ENCODE measurements at regions of chr4 and their contacts with region 1.

Region 1: GRCh38 chr4:103099691-103100392 is at the start of gene BDH2:
- DNase-seq: peak; percentile 49
- ATAC-seq: peak; percentile 97
- H3K4me3 Mint-ChIP-seq: peak within 1 kb of the TSS; percentile 90
- H3K27ac Mint-ChIP-seq: peak within 1 kb of the TSS; percentile 90
- H3K4me1 Mint-ChIP-seq: peaks cover 23% of the 10 kb centered on the region
- H3K27me3 Mint-ChIP-seq: no peaks in the 10 kb centered on the region
- CTCF ChIP-seq: peak; percentile 77
- total RNA-seq, gene BDH2: 17.0 to 19.4 TPM

Region 2: DNA sequence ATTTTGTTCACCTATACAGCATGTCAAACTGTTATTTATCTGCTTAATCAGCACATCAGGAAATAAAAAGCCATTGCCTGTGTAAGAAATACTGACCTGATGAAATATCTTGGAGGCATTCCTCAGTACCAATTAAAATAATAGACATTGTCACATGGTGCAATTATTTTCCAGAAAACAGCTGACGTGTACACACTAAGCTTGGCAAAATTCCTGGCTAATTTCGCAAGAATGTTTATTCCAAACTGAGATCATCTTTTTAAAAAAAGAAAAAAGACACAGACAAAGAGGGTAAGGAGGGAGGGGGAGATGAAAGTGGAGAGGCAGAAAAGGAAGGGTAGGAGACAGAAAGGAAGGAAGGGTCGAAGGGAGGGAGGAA is 660.6 kb before region 1 on chr4:
- CTCF ChIA-PET with region 1: interaction called, 3 read pairs
- POLR2A ChIA-PET with region 1: no interaction called
- intact Hi-C with region 1: loop called (anchors 10 kb)
- DNase-seq: no peak
- ATAC-seq: no peak
- H3K4me3 Mint-ChIP-seq: no peak overlapping the region
- H3K27ac Mint-ChIP-seq: no peak overlapping the region
- H3K4me1 Mint-ChIP-seq: no peaks in the 10 kb centered on the region
- H3K27me3 Mint-ChIP-seq: no peaks in the 10 kb centered on the region
- CTCF ChIP-seq: no peak

Region 3: DNA sequence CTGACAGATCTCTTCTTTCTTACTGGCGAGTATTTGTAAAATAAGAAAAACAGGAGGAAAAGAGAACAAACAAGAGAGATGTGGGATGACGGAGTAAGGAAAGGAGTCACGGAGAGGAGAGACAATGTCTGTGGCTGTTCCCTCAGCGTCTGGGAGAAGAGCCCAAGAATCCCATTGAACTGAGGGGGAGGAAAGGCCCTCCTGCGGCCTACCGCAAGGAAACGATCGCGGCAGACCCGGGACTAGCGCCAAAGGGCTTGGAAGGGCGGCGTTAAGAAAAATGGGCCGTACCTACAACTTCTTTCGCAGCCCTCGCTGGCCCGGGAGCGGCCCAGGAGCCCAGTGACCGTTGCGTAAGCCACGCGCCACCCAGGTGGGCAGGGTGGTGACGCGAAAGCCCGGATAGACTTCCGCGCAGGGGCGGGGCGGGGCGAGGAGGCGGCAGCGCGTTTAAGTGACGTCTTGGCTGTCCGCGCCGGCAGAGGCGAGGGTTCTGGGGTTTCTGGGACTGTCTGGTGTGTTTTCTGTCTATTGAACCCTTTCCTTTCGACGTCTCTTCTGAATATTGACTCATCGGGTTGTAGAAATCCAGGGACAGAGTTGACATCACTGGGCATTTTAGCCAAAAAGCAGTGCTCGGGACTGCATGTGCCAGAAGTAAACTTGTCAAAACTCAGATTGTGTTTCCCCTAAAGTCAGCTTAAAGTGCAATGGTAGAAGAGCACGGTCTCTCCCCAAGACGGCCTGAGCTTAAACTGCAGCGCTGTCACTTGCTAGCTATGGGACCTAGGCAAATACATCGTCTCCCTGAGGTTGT is 80.3 kb before region 1 on chr4 and contains the start of gene SLC9B1:
- CTCF ChIA-PET with region 1: interaction called, 12 read pairs
- POLR2A ChIA-PET with region 1: interaction called, 3 read pairs
- intact Hi-C with region 1: no loop called
- DNase-seq: peak; percentile 96
- ATAC-seq: peak; percentile 99
- H3K4me3 Mint-ChIP-seq: peak within 1 kb of the TSS; percentile 87
- H3K27ac Mint-ChIP-seq: peak within 1 kb of the TSS; percentile 99
- H3K4me1 Mint-ChIP-seq: peaks cover 15% of the 10 kb centered on the region
- H3K27me3 Mint-ChIP-seq: no peaks in the 10 kb centered on the region
- CTCF ChIP-seq: no peak
- total RNA-seq, gene SLC9B1: 1.9 to 2.4 TPM

Region 4: DNA sequence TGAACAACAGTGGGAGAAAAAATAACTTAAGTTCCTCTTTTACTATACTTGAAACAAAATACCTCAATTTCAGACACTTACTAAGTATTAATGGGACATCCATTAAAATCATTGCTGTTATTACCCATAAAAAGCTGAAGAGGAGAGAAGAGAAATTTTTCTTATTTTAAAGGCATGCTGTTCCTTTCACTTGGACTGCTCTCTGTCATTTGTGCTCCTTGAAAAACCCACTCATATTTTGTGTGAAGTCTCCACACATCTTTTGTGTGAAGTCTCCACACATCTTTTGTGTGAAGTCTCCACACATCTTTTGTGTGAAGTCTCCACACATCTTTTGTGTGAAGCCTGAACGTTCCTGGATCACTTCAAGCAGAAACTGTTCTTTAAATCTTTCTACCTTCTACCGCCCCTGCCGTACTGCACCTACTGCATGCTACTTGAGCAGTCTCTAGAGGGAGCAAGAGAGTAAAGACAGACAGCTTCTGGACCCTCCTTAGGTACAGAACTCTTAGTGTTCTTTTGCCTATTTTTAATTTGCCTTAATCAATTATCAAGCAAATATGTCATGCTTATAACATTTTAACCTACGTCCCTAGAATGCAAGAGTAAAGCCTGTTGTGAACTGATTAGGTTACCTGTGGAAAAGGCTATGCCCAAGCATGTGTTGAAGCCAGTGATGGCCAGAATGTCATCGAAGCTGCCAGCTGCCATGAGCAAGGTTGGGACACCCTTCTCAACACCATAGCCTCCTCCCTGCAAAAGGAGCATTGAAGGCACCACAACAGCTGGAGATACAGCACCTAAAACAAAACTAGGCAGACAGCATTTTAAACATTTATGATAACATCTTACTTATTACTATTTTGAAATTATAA is 53.2 kb before region 1 on chr4:
- CTCF ChIA-PET with region 1: interaction called, 13 read pairs
- POLR2A ChIA-PET with region 1: no interaction called
- intact Hi-C with region 1: no loop called
- DNase-seq: peak; percentile 37
- ATAC-seq: peak; percentile 95
- H3K4me3 Mint-ChIP-seq: no peak overlapping the region
- H3K27ac Mint-ChIP-seq: no peak overlapping the region
- H3K4me1 Mint-ChIP-seq: peaks cover 10% of the 10 kb centered on the region
- H3K27me3 Mint-ChIP-seq: no peaks in the 10 kb centered on the region
- CTCF ChIP-seq: peak; percentile 75

Region 5: DNA sequence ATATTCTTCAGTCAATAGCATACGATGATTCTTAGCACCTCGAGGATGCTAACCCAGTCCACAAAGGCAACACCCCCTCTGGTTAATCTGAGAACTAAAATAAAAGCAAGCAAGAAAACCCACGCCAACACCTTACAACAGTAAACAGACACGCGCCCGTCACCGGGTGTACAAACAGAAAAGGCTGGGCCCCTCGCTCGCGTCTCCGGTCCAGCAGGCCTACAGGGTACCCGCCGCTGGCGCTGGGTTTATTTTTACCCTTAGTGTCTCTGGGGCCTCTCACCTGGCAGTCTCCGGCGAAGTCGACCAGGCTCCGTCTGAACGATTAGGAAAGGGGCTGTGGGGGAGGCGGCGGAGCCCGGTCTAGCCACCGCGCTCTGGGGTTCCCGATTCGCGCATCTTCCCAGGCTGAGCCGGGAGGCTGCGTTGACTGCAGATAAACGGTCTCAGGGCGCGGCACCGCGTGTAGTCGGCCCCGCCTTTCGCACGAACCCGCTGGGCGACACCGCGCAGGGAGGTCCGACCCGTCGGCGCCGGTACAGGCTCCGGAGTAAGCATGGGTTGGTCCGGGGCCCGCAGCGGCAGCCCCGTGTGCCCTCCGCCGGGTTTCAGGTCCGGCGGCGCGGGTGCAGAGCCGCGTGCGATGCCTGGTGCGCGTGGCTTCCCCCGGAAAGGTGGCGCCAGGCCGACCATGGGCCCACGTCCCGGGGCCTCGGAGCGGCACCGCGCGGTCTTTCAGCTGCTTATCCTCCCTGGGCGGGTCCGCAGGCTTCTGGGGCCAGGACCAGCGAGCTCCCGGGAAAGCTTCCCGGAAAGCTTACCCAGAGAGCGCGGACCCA is 23.7 kb before region 1 on chr4:
- CTCF ChIA-PET with region 1: interaction called, 71 read pairs
- POLR2A ChIA-PET with region 1: interaction called, 6 read pairs
- intact Hi-C with region 1: no loop called
- DNase-seq: peak; percentile 74
- ATAC-seq: peak; percentile 66
- H3K4me3 Mint-ChIP-seq: peak overlapping the region; percentile 91
- H3K27ac Mint-ChIP-seq: peak overlapping the region; percentile 99
- H3K4me1 Mint-ChIP-seq: peaks cover 42% of the 10 kb centered on the region
- H3K27me3 Mint-ChIP-seq: no peaks in the 10 kb centered on the region
- CTCF ChIP-seq: no peak

Measured in activated CD8-positive, alpha-beta T cell treated with anti-CD3 and anti-CD28 coated beads for 36 hours (primary cell).